ENCODE measurements at regions of chr13 and their contacts with region 1.

Region 1: DNA sequence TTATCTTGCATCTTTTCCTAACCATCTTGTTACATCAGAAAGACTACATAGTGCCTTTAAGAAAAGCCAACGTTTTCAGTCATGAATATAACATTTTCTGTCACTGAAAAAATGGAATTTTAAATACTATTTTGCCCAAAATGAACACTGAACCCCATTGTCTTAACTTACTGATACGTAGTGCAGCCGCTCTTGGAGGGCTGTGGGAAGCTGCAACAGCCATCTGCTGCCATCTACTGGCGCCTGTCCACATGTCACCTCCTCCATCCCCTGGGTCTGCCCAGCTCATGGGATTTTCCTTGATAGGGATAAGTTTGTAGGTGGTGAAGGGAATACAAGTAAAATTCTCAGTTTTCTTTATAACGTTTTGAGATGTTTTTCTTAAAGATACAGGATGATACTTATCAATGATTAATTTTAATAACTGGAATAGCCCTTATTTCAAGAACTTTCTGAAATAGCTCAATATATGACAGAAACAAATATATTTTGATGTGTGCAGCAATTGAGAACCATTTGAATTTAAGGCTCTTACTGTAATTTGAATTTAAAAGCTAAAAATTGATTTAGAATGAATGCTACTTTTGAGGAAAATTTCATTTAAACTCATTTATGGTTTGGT is 73.7 kb downstream of the GGACT start:
- DNase-seq: peak; percentile 56
- ATAC-seq: peak; percentile 92
- H3K4me3 ChIP-seq: no peak overlapping the region
- H3K27ac ChIP-seq: no peak overlapping the region
- H3K4me1 ChIP-seq: peaks cover 31% of the 10 kb centered on the region
- H3K27me3 ChIP-seq: no peaks in the 10 kb centered on the region
- CTCF ChIP-seq: peak; percentile 93
- EP300 ChIP-seq: no peak
- POLR2A ChIP-seq: no peak
- RAD21 ChIP-seq: peak; percentile 84

Region 2: DNA sequence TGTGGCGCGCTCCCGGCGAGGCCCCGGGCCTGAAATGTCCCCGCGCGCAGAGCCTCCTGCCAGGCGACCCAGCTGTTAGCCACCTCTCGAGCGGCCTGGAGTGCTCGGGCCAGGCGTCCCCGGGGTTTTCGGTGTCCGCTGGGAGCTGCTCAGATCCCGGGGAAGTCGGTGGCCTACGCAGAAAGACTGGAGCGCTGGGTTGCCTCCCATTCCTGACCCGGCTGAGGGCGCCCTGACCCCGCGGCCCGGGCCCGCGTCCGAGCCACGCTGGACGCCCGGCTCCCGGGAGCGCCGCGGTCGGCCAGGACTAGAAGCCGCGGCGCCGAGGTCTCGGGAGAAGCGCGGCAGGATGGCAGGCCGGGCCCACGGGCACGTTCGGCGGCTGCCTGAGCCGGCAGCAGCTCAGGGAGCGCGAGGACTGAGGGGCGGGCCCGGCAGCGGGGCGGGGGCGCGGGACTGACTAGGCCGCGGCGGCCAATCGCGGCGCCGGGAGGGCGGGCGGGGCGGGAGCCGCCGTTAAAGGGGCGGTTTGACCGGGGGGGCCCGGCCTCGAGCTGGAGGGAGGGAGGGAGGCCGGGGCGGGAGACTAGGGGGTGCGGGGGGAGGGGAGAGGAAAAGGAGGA is 534.6 kb before region 1 on chr13:
- CTCF ChIA-PET with region 1: no interaction called
- POLR2A ChIA-PET with region 1: no interaction called
- in situ Hi-C with region 1: no loop called
- intact Hi-C with region 1: loop called (anchors 10 kb)
- DNase-seq: no peak
- ATAC-seq: peak; percentile 74
- H3K4me3 ChIP-seq: peak overlapping the region; percentile 37 to 73 (median 48); a peak in 4 of 6 replicates
- H3K27ac ChIP-seq: no peak overlapping the region
- H3K4me1 ChIP-seq: peaks cover 38% of the 10 kb centered on the region
- H3K27me3 ChIP-seq: peaks cover 9 to 75% of the 10 kb centered on the region in 2 experiments; a peak in 4 of 5 replicates
- CTCF ChIP-seq: peak; percentile 53
- EP300 ChIP-seq: no peak
- POLR2A ChIP-seq: no peak
- RAD21 ChIP-seq: peak; percentile 66

Region 3: GRCh38 chr13:100473087-100473486 is 41.8 kb before region 1 on chr13:
- CTCF ChIA-PET with region 1: no interaction called
- POLR2A ChIA-PET with region 1: no interaction called
- in situ Hi-C with region 1: no loop called
- intact Hi-C with region 1: no loop called
- DNase-seq: no peak
- ATAC-seq: no peak
- H3K4me3 ChIP-seq: no peak overlapping the region
- H3K27ac ChIP-seq: no peak overlapping the region
- H3K4me1 ChIP-seq: no peaks in the 10 kb centered on the region
- H3K27me3 ChIP-seq: no peaks in the 10 kb centered on the region
- CTCF ChIP-seq: no peak
- EP300 ChIP-seq: no peak
- POLR2A ChIP-seq: no peak
- RAD21 ChIP-seq: no peak